GM10248 (cell line): ENCODE measurements at regions of chr15 and their contacts with region 1.

Region 1: DNA sequence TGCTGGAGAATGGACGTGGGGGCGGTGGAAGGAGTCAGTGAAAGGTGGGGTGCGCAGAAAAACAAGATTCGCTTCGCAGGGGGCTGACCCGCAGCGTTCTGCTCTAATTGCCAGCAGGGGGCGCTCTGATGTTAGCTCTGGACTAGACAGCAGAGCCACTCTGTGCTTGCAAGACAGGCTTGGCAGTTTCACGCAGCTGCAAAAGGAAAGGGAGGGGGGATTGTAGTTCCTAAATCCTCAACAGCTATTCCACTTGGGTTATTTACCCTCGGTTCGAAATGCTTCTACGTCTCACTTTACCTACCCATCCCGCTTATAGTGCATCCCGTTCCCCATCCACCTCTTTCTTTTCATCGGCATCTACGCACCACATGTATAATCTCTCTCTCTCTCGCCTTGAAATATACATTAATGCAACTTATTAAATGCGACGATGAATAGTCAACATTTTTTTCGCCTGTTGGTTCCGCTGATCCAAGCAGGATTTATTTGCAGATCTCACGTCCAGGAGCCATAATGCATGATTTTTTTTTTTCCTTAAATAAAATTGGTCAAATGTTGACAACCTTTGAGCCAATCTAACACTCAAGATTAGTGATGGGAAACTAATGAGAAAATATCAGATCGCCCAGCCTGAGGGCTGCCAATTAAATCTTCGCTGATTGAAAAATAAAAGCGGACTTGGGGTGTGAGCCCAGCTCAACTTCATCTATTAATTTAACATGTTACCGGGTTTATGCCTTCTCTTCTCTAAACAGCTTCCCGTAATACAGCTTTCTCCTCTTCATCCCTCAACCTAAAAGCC is 216.4 kb downstream of the MEIS2 start:
- DNase-seq: peak; percentile 76
- CTCF ChIP-seq: peak; percentile 87

Region 2: GRCh38 chr15:36858423-36858822 is 25.5 kb before region 1 on chr15:
- CTCF ChIA-PET with region 1: no interaction called
- POLR2A ChIA-PET with region 1: no interaction called
- DNase-seq: no peak
- CTCF ChIP-seq: no peak

Region 3: GRCh38 chr15:37104424-37104981 is 220.6 kb after region 1 on chr15:
- CTCF ChIA-PET with region 1: interaction called, 18 read pairs
- POLR2A ChIA-PET with region 1: interaction called, 5 read pairs
- DNase-seq: no peak
- CTCF ChIP-seq: no peak

Region 4: GRCh38 chr15:37112171-37112570 is 228.3 kb after region 1 on chr15:
- CTCF ChIA-PET with region 1: interaction called, 13 read pairs
- POLR2A ChIA-PET with region 1: no interaction called
- DNase-seq: no peak
- CTCF ChIP-seq: no peak